ENCODE measurements at regions of chr2 and their contacts with region 1.

Region 1: GRCh38 chr2:73176881-73177644 is 25.3 kb upstream of the NOTO start:
- DNase-seq: no peak
- ATAC-seq: peak; percentile 94
- H3K4me3 ChIP-seq: peak overlapping the region; percentile 59; the same call in 1 of the 2 replicates
- H3K27ac ChIP-seq: no peak overlapping the region
- H3K4me1 ChIP-seq: peaks cover 13% of the 10 kb centered on the region; the same call in 1 of the 2 replicates
- H3K27me3 ChIP-seq: peaks cover 13 to 14% of the 10 kb centered on the region in 2 experiments; a peak in 3 of 4 replicates
- CTCF ChIP-seq: peak; percentile 91 to 99 (median 97); a peak in 5 of 6 replicates
- EP300 ChIP-seq: no peak
- POLR2A ChIP-seq: no peak
- RAD21 ChIP-seq: peak; percentile 71

Region 2: GRCh38 chr2:72973566-72974435 is 203.3 kb before region 1 on chr2:
- CTCF ChIA-PET with region 1: interaction called, 20 read pairs
- POLR2A ChIA-PET with region 1: no interaction called
- RAD21 ChIA-PET with region 1: interaction called, 6 read pairs
- SMC1A ChIA-PET with region 1: no interaction called
- in situ Hi-C with region 1: no loop called
- intact Hi-C with region 1: no loop called
- DNase-seq: no peak
- ATAC-seq: peak; percentile 99
- H3K4me3 ChIP-seq: no peak overlapping the region
- H3K27ac ChIP-seq: no peak overlapping the region
- H3K4me1 ChIP-seq: no peaks in the 10 kb centered on the region
- H3K27me3 ChIP-seq: no peaks in the 10 kb centered on the region
- CTCF ChIP-seq: peak; percentile 85 to 95 (median 92)
- EP300 ChIP-seq: no peak
- POLR2A ChIP-seq: no peak
- RAD21 ChIP-seq: peak; percentile 75

Region 3: DNA sequence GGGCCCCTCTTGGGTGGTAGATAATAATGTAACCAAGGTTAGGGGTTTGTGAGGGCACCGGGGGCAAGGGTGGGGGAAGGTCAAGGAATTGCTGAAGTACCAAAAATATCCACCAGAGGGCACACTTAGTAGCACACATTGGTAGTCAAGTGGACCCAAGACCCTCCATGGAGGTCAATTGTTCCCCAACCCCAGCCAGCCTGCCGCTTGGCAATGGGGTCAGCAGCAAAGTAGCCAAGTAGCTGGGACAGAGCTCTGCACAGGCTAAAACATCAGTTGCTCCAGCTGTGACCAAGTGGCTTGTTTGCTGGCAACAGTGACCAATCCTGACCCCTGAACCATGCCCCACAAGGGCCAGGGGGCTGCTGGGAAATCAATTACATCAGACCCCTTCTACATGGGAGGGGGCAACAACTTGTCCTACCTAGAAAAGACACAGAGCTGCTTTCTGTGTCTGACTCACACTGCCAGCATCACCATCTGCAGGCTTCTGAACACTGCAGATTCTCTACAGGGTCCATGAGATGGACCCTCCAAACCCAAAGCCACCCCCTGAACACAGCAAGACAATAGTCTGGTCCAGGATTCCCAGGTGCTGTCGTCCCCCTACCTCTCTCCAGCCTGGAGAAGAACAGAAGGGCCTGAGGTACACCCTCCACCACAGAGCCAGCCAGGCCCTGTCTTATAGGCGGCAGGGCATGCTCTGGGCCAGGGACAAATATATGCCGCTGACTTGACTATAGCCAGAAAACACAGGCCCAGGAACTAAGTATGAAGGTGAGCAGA is 183.7 kb before region 1 on chr2:
- CTCF ChIA-PET with region 1: interaction called, 56 read pairs
- POLR2A ChIA-PET with region 1: no interaction called
- RAD21 ChIA-PET with region 1: interaction called, 11 read pairs
- SMC1A ChIA-PET with region 1: interaction called, 7 read pairs
- in situ Hi-C with region 1: no loop called
- intact Hi-C with region 1: loop called (anchors 1 kb)
- DNase-seq: peak; percentile 3
- ATAC-seq: peak; percentile 89
- H3K4me3 ChIP-seq: no peak overlapping the region
- H3K27ac ChIP-seq: no peak overlapping the region
- H3K4me1 ChIP-seq: no peaks in the 10 kb centered on the region
- H3K27me3 ChIP-seq: no peaks in the 10 kb centered on the region
- CTCF ChIP-seq: peak; percentile 68 to 76 (median 73)
- EP300 ChIP-seq: no peak
- POLR2A ChIP-seq: no peak
- RAD21 ChIP-seq: peak; percentile 41; the same call in 1 of the 2 replicates

Region 4: GRCh38 chr2:73071360-73072133 is 105.5 kb before region 1 on chr2 and contains the start of gene SFXN5:
- CTCF ChIA-PET with region 1: interaction called, 10 read pairs
- POLR2A ChIA-PET with region 1: no interaction called
- RAD21 ChIA-PET with region 1: no interaction called
- SMC1A ChIA-PET with region 1: interaction called, 3 read pairs
- in situ Hi-C with region 1: no loop called
- intact Hi-C with region 1: no loop called
- DNase-seq: peak; percentile 40
- ATAC-seq: peak; percentile 95
- H3K4me3 ChIP-seq: peak within 1 kb of the TSS; percentile 77
- H3K27ac ChIP-seq: peak within 1 kb of the TSS; percentile 86
- H3K4me1 ChIP-seq: no peaks in the 10 kb centered on the region
- H3K27me3 ChIP-seq: peaks cover 0 to under 1% of the 10 kb centered on the region in 2 experiments; a peak in 2 of 4 replicates
- CTCF ChIP-seq: 0 out of 6 replicates have a peak, but pooled peaks of 2 of the 3 experiments have one; percentile 7 to 28
- EP300 ChIP-seq: peak in 1 of 2 experiments; percentile 17; a peak in 1 of 4 replicates
- POLR2A ChIP-seq: peak; percentile 77
- RAD21 ChIP-seq: no peak
- polyA plus RNA-seq, gene SFXN5: 3.3 to 4.0 TPM

Region 5: DNA sequence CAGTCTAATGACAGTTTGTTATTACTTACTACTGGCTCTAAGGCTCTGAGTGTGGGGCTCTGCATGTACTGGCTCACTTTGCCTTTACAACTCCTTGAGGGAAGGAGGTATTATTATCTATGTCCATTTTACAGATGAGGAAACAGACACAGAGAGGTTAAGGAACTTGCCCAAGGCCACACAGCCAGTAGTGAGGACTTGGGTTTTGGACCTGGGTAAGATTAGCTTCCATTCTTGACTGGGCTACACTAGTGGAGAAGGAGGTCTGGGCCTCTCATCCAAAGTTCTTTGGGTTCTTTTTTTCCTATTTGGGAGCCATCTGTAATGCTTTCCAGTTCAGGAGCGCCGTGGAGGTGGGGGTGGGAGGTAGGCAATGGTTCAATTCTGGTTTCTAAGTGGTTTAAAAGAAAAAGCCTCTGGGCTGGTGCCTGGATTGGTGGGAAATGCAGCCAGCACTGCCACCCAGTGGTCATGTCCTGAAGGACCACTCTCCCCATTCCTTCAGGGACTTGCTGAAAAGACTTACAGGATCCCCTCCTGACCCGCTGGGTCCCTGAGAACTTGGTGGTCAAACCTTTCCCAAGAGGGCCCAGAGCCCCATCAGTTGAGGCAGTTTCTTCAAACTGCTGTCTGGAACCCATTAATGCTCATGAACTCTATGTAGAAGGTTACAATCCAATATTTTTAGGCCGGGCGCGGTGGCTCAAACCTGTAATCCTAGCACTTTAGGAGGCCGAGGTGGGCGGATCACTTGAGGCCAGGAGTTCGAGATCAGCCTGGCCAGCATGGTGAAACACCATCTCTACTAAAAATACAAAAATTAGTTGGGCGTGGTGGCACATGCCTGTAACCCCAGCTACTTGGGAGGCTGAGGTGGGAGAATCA is 13.3 kb before region 1 on chr2:
- CTCF ChIA-PET with region 1: interaction called, 20 read pairs
- POLR2A ChIA-PET with region 1: no interaction called
- RAD21 ChIA-PET with region 1: no interaction called
- SMC1A ChIA-PET with region 1: interaction called, 3 read pairs
- in situ Hi-C with region 1: no loop called
- intact Hi-C with region 1: no loop called
- DNase-seq: no peak
- ATAC-seq: peak; percentile 99
- H3K4me3 ChIP-seq: no peak overlapping the region
- H3K27ac ChIP-seq: no peak overlapping the region
- H3K4me1 ChIP-seq: no peaks in the 10 kb centered on the region
- H3K27me3 ChIP-seq: peaks cover 0 to 2% of the 10 kb centered on the region in 2 experiments; a peak in 1 of 4 replicates
- CTCF ChIP-seq: peak; percentile 85 to 91 (median 88)
- EP300 ChIP-seq: no peak
- POLR2A ChIP-seq: no peak
- RAD21 ChIP-seq: peak; percentile 83

Region 6: GRCh38 chr2:73212448-73213176 is 35.5 kb after region 1 on chr2:
- CTCF ChIA-PET with region 1: interaction called, 79 read pairs
- POLR2A ChIA-PET with region 1: no interaction called
- RAD21 ChIA-PET with region 1: interaction called, 28 read pairs
- SMC1A ChIA-PET with region 1: interaction called, 17 read pairs
- in situ Hi-C with region 1: no loop called
- intact Hi-C with region 1: no loop called
- DNase-seq: no peak
- ATAC-seq: peak; percentile 86
- H3K4me3 ChIP-seq: no peak overlapping the region
- H3K27ac ChIP-seq: no peak overlapping the region
- H3K4me1 ChIP-seq: peaks cover 8% of the 10 kb centered on the region
- H3K27me3 ChIP-seq: no peaks in the 10 kb centered on the region
- CTCF ChIP-seq: peak; percentile 88 to 97 (median 96)
- EP300 ChIP-seq: no peak
- POLR2A ChIP-seq: no peak
- RAD21 ChIP-seq: peak; percentile 63